ENCODE measurements at regions of chr4 and their contacts with region 1.

Region 1: DNA sequence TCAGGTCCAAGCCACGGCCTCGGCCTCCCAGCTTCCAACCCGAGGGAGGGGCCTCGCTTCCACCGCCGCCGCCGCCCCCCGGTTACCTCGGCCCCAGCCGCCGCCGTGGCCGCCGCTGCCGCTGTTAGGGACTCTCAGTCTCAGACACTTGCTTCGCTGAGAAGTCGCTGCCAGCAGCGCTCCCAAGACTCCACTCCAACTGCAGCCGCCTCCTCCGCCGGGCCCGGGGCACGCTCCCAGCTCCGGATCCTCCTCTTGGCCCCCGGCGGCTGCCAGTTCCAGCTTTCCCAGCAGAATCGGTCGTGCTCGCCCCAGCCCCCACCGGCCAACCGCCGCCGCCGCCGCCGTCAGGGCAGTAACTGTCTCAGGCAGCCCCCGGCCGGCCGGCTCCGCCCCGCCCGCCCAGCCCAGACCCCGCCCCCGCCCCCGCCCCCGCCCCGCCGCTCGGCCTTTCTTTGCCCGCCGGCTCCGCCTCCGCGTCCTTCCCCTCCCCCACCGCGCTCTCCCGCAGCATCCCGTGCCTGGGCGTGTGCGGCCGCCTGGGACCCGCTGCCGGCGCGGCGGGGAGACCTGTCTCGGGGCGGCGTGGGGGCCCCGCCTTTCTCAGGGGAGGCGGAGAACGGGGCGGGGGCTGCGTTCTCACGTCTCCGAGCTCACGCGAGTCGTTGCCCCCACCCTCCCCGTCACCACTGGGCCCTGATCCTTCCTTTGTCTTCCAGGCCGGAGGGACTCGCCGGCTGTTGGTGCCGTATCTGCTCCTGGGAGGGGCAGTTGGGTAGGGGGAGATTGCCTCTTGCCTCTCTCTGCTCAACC is at the start of gene ANKRD50:
- DNase-seq: peak; percentile 88 to 94 (median 90)
- ATAC-seq: peak; percentile 84
- H3K4me3 ChIP-seq: peak within 1 kb of the TSS; percentile 78
- H3K27ac ChIP-seq: peak within 1 kb of the TSS; percentile 94
- H3K4me1 ChIP-seq: peaks cover 9 to 10% of the 10 kb centered on the region in 2 experiments
- H3K27me3 ChIP-seq: no peaks in the 10 kb centered on the region
- CTCF ChIP-seq: no peak
- EP300 ChIP-seq: no peak
- POLR2A ChIP-seq: peak; percentile 89
- RAD21 ChIP-seq: no peak
- polyA plus RNA-seq, gene ANKRD50: 2.0 TPM

Region 2: DNA sequence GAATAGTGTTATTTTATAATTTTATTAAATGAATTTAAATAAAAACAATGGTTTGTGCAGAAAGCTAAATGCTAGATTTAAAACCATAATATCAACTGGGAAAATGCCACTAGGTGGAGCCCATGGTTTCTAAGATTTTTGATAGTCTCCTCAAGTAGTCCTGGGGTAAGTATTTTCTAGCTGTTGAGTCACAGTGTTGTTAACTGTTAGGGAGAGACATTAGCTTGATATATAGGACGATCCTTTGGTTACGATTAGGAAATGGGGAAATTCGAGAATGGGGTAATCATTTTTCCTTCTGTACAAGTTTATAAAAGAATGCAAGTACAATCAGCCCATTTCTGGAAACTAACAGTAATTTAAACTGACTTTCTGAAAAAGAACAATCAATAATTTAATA is 378.5 kb before region 1 on chr4:
- CTCF ChIA-PET with region 1: no interaction called
- POLR2A ChIA-PET with region 1: no interaction called
- in situ Hi-C with region 1: no loop called
- intact Hi-C with region 1: loop called (anchors 10 kb)
- DNase-seq: peak; percentile 8 to 57 (median 10)
- ATAC-seq: peak; percentile 84
- H3K4me3 ChIP-seq: no peak overlapping the region
- H3K27ac ChIP-seq: no peak overlapping the region
- H3K4me1 ChIP-seq: peaks cover 0 to 5% of the 10 kb centered on the region in 2 experiments; a peak in 1 of 5 replicates
- H3K27me3 ChIP-seq: no peaks in the 10 kb centered on the region
- CTCF ChIP-seq: peak; percentile 10 to 62 (median 26); a peak in 4 of 6 replicates
- EP300 ChIP-seq: no peak
- POLR2A ChIP-seq: no peak
- RAD21 ChIP-seq: peak; percentile 70 to 83

Region 3: DNA sequence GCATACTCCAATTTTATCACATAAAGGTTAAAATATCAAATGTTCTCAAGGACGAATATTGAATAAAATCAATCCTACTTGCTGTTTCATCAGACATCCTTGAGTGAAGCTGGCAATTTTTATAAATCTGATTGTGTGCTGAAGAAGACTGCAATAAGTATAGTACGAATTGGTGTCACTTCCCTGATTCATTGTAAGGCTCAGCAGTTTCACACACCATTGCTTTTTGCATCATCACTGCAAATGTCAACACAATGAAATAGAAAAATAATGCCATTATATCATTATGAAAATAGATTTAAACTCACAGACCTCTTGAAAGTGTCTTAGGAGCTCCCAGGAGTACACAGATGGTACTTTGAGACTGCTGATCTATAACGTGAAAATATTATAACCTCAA is 172.6 kb before region 1 on chr4:
- CTCF ChIA-PET with region 1: no interaction called
- POLR2A ChIA-PET with region 1: no interaction called
- in situ Hi-C with region 1: no loop called
- intact Hi-C with region 1: loop called (anchors 5 kb)
- DNase-seq: no peak
- ATAC-seq: no peak
- H3K4me3 ChIP-seq: no peak overlapping the region
- H3K27ac ChIP-seq: no peak overlapping the region
- H3K4me1 ChIP-seq: no peaks in the 10 kb centered on the region
- H3K27me3 ChIP-seq: no peaks in the 10 kb centered on the region
- CTCF ChIP-seq: no peak
- EP300 ChIP-seq: no peak
- POLR2A ChIP-seq: no peak
- RAD21 ChIP-seq: no peak

Region 4: GRCh38 chr4:124596816-124597215 is 115.8 kb before region 1 on chr4:
- CTCF ChIA-PET with region 1: no interaction called
- POLR2A ChIA-PET with region 1: no interaction called
- in situ Hi-C with region 1: no loop called
- intact Hi-C with region 1: loop called (anchors 10 kb)
- DNase-seq: no peak
- ATAC-seq: no peak
- H3K4me3 ChIP-seq: no peak overlapping the region
- H3K27ac ChIP-seq: no peak overlapping the region
- H3K4me1 ChIP-seq: no peaks in the 10 kb centered on the region
- H3K27me3 ChIP-seq: no peaks in the 10 kb centered on the region
- CTCF ChIP-seq: no peak
- EP300 ChIP-seq: no peak
- POLR2A ChIP-seq: no peak
- RAD21 ChIP-seq: no peak

Region 5: GRCh38 chr4:124753941-124754581 is 41.5 kb after region 1 on chr4:
- CTCF ChIA-PET with region 1: no interaction called
- POLR2A ChIA-PET with region 1: no interaction called
- in situ Hi-C with region 1: no loop called
- intact Hi-C with region 1: no loop called
- DNase-seq: no peak
- ATAC-seq: no peak
- H3K4me3 ChIP-seq: no peak overlapping the region
- H3K27ac ChIP-seq: no peak overlapping the region
- H3K4me1 ChIP-seq: no peaks in the 10 kb centered on the region
- H3K27me3 ChIP-seq: peaks cover 0 to 5% of the 10 kb centered on the region in 2 experiments; a peak in 1 of 5 replicates
- CTCF ChIP-seq: no peak
- EP300 ChIP-seq: no peak
- POLR2A ChIP-seq: no peak
- RAD21 ChIP-seq: no peak

Region 6: DNA sequence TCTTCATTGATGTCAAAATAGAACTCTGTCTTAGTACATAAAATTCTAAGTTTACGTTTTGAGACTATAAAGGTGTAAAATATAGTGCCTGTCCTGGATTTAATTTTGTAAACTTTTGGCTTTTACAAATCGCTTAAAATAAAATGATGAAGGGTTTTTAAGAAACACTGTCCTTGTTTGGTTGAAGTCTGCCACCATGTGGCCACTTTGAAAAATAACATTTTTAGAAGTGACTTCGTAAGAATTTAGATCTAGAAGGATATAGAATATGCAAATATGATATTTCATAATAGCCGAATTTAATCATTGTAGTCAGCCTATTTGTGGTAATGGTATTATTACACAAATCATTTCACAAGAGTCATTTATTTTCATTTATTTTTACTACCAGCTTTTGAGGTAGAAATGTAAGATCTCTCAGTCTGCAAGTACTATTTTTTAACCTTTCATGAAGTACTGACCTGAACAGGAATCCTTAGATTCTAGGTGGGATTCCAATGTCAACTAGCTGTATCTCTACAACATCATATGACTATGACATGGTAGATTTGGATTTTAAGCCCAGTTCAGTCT is 571.2 kb after region 1 on chr4:
- CTCF ChIA-PET with region 1: no interaction called
- POLR2A ChIA-PET with region 1: no interaction called
- in situ Hi-C with region 1: no loop called
- intact Hi-C with region 1: loop called (anchors 10 kb)
- DNase-seq: peak; percentile 5 to 30 (median 12)
- ATAC-seq: no peak
- H3K4me3 ChIP-seq: no peak overlapping the region
- H3K27ac ChIP-seq: no peak overlapping the region
- H3K4me1 ChIP-seq: no peaks in the 10 kb centered on the region
- H3K27me3 ChIP-seq: no peaks in the 10 kb centered on the region
- CTCF ChIP-seq: peak in 1 of 3 experiments; percentile 66; a peak in 3 of 6 replicates
- EP300 ChIP-seq: no peak
- POLR2A ChIP-seq: no peak
- RAD21 ChIP-seq: peak; percentile 72

Measured in K562 (cell line).